ENCODE measurements at regions of chr2 and their contacts with region 1.

Region 1: DNA sequence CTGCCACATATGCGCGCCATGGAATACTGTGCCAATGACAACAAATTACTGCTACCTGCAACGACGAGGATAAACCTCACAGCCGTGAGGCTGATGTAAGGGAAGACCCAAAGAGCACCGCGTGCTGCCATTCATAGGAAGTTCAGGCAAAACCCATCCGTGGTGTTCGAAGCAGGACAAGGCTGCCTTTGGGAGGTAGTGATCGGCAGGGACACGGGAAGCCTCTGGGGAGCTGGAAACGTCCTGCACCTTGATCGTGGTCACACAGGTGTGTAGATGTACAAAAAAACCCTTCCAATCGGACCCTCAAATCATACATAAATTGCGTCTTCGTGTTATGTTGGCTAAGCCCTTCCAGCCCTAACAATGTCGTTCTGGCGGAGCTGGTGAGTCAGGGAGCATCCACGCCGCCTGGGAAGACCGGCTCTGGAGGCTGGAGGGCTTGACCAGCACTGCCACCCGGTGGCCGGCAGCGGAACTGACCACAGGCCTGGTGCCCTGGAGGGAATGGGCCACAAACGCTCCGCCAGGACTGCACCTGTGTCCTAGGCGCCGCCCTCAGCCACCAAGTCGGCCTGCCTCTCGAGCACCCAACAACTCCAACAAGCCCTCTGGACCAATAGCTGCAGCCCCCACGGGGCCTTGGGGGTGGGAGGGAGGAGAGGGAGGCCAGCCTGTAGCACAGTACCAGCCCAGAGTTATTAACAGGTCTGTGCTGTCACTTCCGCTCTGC is 4.1 kb upstream of the NEURL3 start:
- DNase-seq: peak; percentile 92
- ATAC-seq: peak; percentile 95

Region 2: GRCh38 chr2:96138179-96139145 is 370.8 kb before region 1 on chr2 and contains the start of gene ASTL:
- intact Hi-C with region 1: loop called (anchors 5 kb)
- DNase-seq: peak; percentile 47
- ATAC-seq: peak; percentile 84
- total RNA-seq, gene ASTL: not detected

Region 3: DNA sequence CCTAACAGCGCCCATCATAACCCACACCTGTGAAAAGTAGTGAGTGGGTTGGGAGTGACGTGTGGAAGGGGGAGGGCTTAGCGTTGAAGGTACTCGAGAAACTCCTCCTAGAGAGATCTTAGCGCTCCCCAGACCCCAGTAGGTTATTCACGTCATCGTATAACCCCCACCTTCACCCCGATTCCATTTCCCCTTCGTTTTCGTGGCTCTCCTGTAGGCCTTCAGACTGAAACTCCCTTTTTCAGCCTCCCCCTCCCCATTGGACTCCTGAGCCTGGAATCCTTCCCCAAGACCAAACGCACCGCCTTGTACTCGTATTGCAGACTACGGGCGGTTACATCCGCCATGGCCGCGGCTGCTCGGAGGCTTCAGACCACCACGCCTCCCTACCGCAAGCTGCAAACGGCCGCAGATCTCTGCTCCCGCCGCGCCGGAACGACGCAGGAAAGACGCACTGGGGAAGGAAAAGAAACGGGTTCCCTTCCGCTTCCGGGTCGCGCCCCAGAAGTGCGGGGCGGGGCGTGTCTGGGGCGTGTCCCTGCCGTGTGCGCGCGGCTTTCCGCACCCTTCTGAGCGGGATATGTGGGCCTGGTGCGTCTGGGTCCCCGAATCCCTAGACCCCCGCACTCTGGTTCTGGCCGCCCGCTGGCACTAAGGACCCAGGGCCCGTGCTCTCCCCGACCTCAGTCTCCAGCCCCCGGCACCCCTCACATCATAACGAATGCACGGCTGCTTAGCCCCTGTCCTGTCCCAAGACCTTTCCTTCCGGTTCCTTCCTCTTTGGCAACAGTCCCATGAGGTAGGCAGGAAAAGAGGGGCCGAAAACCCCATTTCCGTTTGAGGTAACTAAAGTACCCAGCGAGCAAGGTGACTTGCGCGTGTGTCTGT is 203.9 kb before region 1 on chr2 and contains the start of gene SNRNP200:
- intact Hi-C with region 1: loop called (anchors 5 kb)
- DNase-seq: peak; percentile 94
- ATAC-seq: peak; percentile 100
- total RNA-seq, gene SNRNP200: 50.1 TPM

Region 4: DNA sequence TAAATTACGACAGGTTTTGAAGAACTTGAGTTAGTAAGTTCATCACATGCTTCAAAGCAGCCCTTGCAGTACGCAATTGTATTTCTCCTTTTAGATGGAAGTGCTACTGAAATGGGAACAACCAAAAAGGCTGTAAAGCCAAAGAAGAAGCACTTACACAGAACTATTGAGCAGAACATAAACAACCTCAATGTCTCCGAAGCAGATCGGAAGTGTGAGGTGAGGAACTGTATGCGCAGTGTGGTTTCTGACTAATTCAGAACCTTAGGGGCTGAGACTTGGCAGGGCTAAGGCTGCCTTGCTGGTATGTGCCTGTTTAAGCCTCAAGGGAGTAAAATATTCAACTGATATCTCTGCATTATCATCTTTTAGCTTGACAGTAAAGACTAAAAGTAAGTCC is 165.3 kb before region 1 on chr2:
- intact Hi-C with region 1: loop called (anchors 10 kb)
- DNase-seq: no peak
- ATAC-seq: no peak

Region 5: GRCh38 chr2:96408616-96409542 is 100.4 kb before region 1 on chr2:
- intact Hi-C with region 1: loop called (anchors 2 kb)
- DNase-seq: peak; percentile 83
- ATAC-seq: peak; percentile 90

Region 6: DNA sequence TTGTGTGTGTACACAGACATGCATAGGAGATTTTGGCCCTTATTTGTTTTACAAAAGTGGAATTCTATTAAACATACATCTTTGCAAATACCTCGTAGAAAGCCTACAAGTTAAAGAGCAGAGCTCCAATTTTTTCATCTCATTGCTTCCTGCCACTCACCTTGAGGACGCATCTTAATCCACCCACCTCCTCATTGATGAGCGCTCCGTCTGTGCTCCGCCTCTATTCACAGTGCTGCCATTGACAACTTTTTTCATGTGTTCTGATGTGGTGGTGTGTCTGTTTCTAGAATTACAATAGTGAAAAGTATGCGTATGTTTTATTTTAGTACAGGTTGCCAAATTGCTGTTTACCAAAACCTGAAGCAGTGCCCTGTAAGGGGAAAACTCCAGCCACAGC is 40.4 kb before region 1 on chr2:
- intact Hi-C with region 1: loop called (anchors 5 kb)
- DNase-seq: no peak
- ATAC-seq: no peak